Panc1 (cell line): ENCODE measurements at regions of chr15 and their contacts with region 1.

Region 1: DNA sequence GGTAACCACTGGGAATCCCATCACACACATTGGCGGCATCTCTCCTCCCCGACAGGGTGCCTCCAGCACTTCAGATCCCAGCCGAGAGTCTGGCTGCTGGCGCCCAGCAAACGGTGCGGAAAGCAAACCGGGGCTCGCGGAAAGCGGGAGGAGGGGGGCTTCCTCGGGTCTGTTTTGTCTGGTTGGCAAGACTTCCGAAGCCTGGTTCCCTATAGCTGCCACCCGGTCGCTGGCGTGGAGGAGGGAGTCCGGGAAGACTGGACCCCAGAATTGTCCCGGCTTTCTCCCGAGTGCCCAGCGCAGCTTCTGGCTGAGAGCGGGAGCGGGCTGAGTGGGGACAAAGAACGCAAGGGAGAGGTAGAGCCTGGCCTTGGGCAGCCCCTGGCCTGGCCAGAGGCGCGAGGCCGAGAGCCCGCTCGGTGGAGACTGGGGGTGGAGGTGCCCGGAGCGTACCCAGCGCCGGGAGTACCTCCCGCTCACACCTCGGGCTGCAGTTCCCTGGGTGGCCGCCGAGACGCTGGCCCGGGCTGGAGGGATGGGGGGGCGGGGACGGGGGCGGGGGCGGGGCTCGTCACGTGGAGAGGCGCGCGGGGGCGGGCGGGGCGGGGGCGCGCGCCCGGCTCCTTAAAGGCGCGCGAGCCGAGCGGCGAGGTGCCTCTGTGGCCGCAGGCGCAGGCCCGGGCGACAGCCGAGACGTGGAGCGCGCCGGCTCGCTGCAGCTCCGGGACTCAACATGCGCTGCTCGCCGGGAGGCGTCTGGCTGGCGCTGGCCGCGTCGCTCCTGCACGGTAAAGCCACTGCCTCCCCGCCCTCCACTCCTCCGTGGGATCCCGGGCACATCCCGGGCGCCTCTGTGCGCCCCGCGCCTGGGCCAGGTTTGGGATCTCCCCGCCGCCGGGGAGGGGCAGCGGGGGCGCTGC is at the start of gene CHRNA7:
- DNase-seq: no peak
- ATAC-seq: peak; percentile 96
- H3K4me3 ChIP-seq: peak within 1 kb of the TSS; percentile 38 to 56
- H3K27ac ChIP-seq: no peak within 1 kb of the TSS
- H3K4me1 ChIP-seq: no peaks in the 10 kb centered on the region
- H3K27me3 ChIP-seq: peaks cover 21% of the 10 kb centered on the region
- CTCF ChIP-seq: peak; percentile 7; the same call in 1 of the 2 replicates
- total RNA-seq, gene CHRNA7: 3.3 TPM

Region 2: DNA sequence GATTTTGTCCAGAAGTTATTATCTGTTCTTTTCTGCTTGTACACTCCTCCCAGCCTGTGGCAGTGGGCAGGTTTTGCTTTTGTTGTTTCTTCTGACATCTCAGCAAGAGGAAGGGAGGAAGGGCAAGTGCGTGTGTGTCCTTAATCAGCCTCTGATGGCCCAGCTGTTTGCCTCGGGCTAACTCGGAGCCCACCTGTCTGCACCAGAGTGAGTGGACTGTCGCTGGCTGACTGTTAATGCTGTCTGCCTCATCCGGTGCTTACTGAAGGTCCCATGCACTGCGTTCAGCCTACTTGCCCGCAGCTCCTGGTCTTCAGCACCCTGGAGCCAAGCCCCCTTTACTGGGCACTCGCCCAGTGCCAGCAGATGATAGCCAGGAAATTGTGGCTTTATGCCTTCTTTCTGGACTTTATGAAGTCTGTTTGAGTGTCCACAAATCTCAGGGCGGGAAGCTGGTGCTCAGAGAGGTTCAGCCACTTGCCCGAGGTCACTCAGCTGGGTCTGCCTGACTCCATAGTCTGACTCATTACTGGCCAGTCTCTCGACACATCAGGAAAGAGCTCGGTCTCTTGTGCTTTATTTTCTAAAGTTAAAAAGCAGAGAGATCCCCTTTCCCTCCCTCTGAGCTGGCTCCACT is 89.7 kb after region 1 on chr15:
- CTCF ChIA-PET with region 1: no interaction called
- POLR2A ChIA-PET with region 1: no interaction called
- in situ Hi-C with region 1: no loop called
- intact Hi-C with region 1: loop called (anchors 10 kb)
- DNase-seq: no peak
- ATAC-seq: no peak
- H3K4me3 ChIP-seq: no peak overlapping the region
- H3K27ac ChIP-seq: no peak overlapping the region
- H3K4me1 ChIP-seq: no peaks in the 10 kb centered on the region
- H3K27me3 ChIP-seq: no peaks in the 10 kb centered on the region; the same call in 1 of the 2 replicates
- CTCF ChIP-seq: no peak